IMR-90 (cell line): ENCODE measurements at regions of chr4 and their contacts with region 1.

Region 1: DNA sequence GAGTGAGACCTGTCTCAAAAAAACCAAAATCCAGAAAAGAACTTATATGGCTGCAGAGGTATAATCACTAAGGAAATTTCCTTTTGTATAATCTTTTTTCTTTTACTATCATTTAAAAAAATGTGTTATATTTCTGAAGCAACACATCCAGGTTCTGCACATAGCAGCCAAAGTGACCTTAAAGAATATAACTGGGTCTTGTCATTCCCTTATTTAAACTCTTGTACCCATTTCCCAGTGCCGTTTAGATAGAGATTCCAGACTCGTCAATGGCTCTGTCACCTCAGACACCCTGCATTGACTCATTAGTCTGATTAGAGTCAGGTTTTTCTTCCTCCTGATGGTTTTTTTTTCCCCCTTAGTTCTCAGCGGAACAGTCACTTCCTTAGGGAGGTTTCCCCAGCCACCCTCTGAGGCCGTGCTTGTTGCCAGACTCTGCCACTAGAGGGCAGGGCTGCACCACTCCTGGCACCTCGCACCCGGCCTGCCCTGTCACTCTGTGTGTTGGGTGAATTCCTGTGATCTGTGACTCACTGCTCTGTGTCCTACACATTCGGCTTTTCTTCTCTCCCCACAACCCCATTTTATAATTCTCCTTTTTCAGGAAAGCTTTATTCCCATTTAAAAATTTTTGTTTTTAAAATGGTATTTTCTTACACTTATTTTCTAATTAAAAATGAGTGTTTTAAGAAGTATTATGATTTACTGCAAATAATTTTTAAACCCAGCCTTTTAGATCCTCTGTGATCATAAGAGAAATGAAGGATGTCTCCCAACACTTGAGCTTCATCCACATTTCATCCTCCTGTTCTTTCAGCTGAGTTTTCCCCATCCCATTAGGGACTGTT is 32.1 kb downstream of the HTT start:
- DNase-seq: peak; percentile 89
- ATAC-seq: peak; percentile 98
- H3K4me3 ChIP-seq: no peak overlapping the region
- H3K27ac ChIP-seq: no peak overlapping the region
- H3K4me1 ChIP-seq: peaks cover 10% of the 10 kb centered on the region
- H3K27me3 ChIP-seq: no peaks in the 10 kb centered on the region
- CTCF ChIP-seq: peak; percentile 99
- POLR2A ChIP-seq: peak; percentile 61; the same call in 1 of the 2 replicates
- RAD21 ChIP-seq: peak; percentile 100

Region 2: GRCh38 chr4:2116687-2117400 is 989.7 kb before region 1 on chr4:
- CTCF ChIA-PET with region 1: no interaction called
- POLR2A ChIA-PET with region 1: no interaction called
- dilution Hi-C with region 1: no loop called
- in situ Hi-C with region 1: no loop called
- intact Hi-C with region 1: no loop called
- DNase-seq: no peak
- ATAC-seq: no peak
- H3K4me3 ChIP-seq: no peak overlapping the region
- H3K27ac ChIP-seq: no peak overlapping the region
- H3K4me1 ChIP-seq: no peaks in the 10 kb centered on the region
- H3K27me3 ChIP-seq: peaks cover 7% of the 10 kb centered on the region; the same call in 1 of the 2 replicates
- CTCF ChIP-seq: no peak
- POLR2A ChIP-seq: no peak
- RAD21 ChIP-seq: no peak

Region 3: DNA sequence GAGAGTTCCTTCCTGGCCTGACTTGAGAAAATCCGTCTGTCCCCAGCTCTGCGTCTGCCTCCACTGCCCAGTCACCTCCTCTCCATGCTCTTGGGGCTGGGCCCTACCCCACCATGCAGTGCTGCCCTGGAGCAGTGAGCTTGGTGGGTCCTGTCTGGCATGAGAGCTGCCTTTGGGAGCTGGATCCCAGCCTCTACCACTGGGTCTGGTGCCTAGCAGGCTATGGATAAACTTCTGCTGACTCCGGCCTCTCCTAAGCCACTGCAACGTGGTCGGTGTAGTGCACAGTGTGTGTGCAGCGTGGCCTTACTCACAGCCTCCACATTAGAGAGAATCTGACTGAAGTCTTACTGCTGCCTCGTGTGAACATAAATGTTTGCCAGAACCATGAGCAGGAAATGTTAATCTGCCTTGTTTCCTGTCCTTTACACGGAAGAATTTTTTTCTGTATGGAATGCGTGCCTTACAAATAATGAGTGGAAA is 15.6 kb after region 1 on chr4:
- CTCF ChIA-PET with region 1: interaction called, 15 read pairs
- POLR2A ChIA-PET with region 1: no interaction called
- dilution Hi-C with region 1: no loop called
- in situ Hi-C with region 1: no loop called
- intact Hi-C with region 1: loop called (anchors 2 kb)
- DNase-seq: peak; percentile 81
- ATAC-seq: peak; percentile 70
- H3K4me3 ChIP-seq: no peak overlapping the region
- H3K27ac ChIP-seq: peak overlapping the region; percentile 49
- H3K4me1 ChIP-seq: peaks cover 6% of the 10 kb centered on the region
- H3K27me3 ChIP-seq: no peaks in the 10 kb centered on the region
- CTCF ChIP-seq: no peak
- POLR2A ChIP-seq: no peak
- RAD21 ChIP-seq: no peak

Region 4: GRCh38 chr4:3135155-3136011 is 28.8 kb after region 1 on chr4:
- CTCF ChIA-PET with region 1: interaction called, 8 read pairs
- POLR2A ChIA-PET with region 1: no interaction called
- dilution Hi-C with region 1: no loop called
- in situ Hi-C with region 1: no loop called
- intact Hi-C with region 1: loop called (anchors 1 kb)
- DNase-seq: no peak
- ATAC-seq: no peak; the same call in 1 of the 2 replicates
- H3K4me3 ChIP-seq: no peak overlapping the region
- H3K27ac ChIP-seq: no peak overlapping the region
- H3K4me1 ChIP-seq: no peaks in the 10 kb centered on the region
- H3K27me3 ChIP-seq: no peaks in the 10 kb centered on the region
- CTCF ChIP-seq: no peak
- POLR2A ChIP-seq: no peak
- RAD21 ChIP-seq: no peak

Region 5: GRCh38 chr4:3442959-3443749 is 336.6 kb after region 1 on chr4:
- CTCF ChIA-PET with region 1: no interaction called
- POLR2A ChIA-PET with region 1: no interaction called
- dilution Hi-C with region 1: no loop called
- in situ Hi-C with region 1: no loop called
- intact Hi-C with region 1: loop called (anchors 5 kb)
- DNase-seq: no peak
- ATAC-seq: peak; percentile 86
- H3K4me3 ChIP-seq: no peak overlapping the region
- H3K27ac ChIP-seq: no peak overlapping the region
- H3K4me1 ChIP-seq: no peaks in the 10 kb centered on the region
- H3K27me3 ChIP-seq: no peaks in the 10 kb centered on the region
- CTCF ChIP-seq: peak; percentile 82
- POLR2A ChIP-seq: no peak
- RAD21 ChIP-seq: peak; percentile 95

Region 6: DNA sequence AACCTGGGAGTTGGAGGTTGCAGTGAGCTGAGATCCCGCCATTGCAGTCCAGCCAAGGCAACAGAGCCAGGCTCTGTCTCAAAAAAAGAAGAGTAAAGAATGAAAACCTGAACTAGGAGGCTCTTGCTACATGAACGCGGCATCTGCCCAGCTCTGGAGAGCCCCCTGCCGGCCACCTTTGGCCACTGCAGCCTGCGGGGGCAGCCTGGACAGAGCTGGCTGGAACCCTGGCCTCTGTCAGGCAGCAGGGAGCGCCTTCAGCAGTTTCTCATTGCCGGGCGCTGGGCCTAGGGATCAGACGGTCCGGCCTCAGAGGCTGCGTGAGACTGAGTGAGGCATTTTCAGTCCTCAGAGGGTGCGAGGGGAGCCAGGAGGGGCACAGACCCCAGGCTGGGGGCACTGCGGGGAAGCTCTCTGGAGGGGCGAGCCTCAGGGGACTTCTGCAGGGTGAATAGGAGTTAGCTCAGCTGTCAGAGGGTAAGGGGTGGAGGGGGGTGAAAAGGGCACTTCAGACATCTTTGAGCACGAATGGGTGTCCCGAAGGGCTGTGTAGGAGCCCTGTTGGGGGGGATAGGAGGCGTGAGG is 374.1 kb after region 1 on chr4:
- CTCF ChIA-PET with region 1: no interaction called
- POLR2A ChIA-PET with region 1: no interaction called
- dilution Hi-C with region 1: no loop called
- in situ Hi-C with region 1: no loop called
- intact Hi-C with region 1: loop called (anchors 5 kb)
- DNase-seq: peak; percentile 63
- ATAC-seq: peak; percentile 98
- H3K4me3 ChIP-seq: no peak overlapping the region
- H3K27ac ChIP-seq: no peak overlapping the region
- H3K4me1 ChIP-seq: no peaks in the 10 kb centered on the region
- H3K27me3 ChIP-seq: peaks cover 51% of the 10 kb centered on the region
- CTCF ChIP-seq: peak; percentile 97
- POLR2A ChIP-seq: no peak
- RAD21 ChIP-seq: peak; percentile 85